PC-3 (cell line): ENCODE measurements at regions of chr6 and their contacts with region 1.

Region 1: DNA sequence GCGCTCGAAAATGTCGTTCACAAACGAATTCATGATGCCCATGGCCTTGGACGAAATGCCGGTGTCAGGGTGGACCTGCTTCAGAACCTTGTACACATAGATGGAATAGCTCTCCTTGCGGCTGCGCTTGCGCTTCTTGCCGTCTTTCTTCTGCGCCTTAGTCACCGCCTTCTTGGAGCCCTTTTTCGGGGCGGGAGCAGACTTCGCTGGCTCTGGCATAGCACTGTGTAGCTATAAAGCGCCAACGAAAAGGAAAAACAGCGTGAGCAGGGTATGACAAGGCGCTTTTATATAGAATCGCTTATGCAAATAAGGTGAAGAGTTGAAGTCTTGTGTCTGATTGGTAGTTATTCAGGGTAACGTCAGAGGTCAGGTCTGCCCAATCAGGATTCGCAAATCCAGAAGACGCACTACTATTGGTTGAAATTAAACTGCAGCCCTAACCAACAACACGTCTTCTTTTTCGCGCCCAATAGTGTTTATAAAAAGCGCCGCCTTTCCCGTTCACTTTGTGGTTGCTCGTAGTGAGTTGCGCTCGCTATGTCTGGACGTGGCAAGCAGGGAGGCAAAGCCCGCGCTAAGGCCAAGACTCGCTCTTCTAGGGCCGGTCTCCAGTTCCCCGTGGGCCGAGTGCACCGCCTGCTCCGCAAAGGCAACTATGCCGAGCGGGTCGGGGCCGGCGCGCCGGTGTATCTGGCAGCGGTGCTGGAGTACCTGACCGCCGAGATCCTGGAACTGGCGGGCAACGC is 114.8 kb upstream of the PRSS16 start:
- DNase-seq: peak; percentile 99
- ATAC-seq: peak; percentile 72
- H3K4me3 ChIP-seq: peak overlapping the region; percentile 82
- H3K27ac ChIP-seq: peak overlapping the region; percentile 95
- H3K4me1 ChIP-seq: peaks cover 32% of the 10 kb centered on the region
- H3K27me3 ChIP-seq: no peaks in the 10 kb centered on the region
- CTCF ChIP-seq: no peak

Region 2: DNA sequence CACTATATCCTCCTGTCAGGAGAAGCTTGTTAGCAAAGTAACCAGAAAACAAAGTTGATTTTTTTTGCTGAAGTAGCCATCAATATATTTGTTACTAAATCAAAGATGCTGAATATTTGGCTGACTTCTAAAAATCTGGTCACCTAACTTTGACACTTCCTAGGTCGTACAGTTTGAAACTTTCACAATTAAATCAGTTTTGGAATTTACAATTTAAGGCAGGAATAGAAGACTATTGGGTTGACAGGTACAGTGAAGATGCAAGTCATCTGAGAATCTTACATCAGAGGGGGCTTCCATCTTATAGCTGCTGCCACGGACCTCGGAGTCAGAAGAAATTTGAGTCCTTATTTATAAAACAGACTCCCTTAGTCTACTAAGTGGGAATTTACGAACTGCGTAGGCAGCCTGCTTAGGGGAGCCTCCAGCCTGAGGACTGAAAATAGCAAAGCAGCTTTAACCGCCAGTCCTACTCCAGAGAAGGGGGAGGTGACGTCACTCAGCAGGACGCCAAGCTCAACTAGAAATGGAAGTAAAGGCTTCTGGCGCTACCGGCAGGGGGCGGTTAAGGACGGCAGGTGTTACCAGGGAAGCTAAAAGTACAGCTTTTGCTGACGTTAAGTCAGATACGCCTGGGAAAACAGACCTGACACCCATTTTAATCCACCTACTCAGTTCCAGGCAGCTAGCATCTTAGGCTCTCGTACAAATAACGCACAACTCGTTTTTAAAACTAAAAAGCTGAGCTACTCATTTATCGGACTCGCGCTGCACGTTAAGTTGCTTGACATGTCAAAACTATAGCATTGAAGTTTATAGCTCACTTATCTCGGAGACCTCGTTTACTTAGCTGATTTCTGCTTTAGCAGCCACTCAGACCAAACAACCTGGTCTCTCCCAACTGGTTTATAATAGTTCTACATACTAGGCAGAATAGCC is 1106.5 kb before region 1 on chr6:
- CTCF ChIA-PET with region 1: no interaction called
- POLR2A ChIA-PET with region 1: no interaction called
- intact Hi-C with region 1: loop called (anchors 2 kb)
- DNase-seq: peak; percentile 96
- ATAC-seq: peak; percentile 37
- H3K4me3 ChIP-seq: peak overlapping the region; percentile 73
- H3K27ac ChIP-seq: peak overlapping the region; percentile 56
- H3K4me1 ChIP-seq: peaks cover 60% of the 10 kb centered on the region
- H3K27me3 ChIP-seq: no peaks in the 10 kb centered on the region
- CTCF ChIP-seq: peak; percentile 85

Region 3: DNA sequence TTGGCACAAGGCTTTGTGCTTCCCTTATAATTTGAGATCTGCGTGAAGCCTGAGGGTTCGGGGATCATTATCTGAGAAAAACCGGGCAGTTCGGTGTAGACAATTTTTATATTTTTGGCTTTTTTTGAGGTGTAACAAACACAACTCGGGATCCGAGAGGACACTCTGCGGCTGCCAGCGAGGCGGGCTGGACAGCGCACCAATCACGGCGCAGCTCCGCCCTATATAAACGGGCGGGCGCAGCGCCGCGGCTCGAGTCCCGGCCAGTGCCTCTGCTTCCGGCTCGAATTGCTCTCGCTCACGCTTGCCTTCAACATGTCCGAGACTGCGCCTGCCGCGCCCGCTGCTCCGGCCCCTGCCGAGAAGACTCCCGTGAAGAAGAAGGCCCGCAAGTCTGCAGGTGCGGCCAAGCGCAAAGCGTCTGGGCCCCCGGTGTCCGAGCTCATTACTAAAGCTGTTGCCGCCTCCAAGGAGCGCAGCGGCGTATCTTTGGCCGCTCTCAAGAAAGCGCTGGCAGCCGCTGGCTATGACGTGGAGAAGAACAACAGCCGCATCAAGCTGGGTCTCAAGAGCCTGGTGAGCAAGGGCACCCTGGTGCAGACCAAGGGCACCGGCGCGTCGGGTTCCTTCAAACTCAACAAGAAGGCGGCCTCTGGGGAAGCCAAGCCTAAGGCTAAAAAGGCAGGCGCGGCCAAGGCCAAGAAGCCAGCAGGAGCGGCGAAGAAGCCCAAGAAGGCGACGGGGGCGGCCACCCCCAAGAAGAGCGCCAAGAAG is 976.4 kb before region 1 on chr6:
- CTCF ChIA-PET with region 1: no interaction called
- POLR2A ChIA-PET with region 1: interaction called, 18 read pairs
- intact Hi-C with region 1: loop called (anchors 5 kb)
- DNase-seq: peak; percentile 95
- ATAC-seq: peak; percentile 47
- H3K4me3 ChIP-seq: peak overlapping the region; percentile 90
- H3K27ac ChIP-seq: peak overlapping the region; percentile 79
- H3K4me1 ChIP-seq: peaks cover 25% of the 10 kb centered on the region
- H3K27me3 ChIP-seq: no peaks in the 10 kb centered on the region
- CTCF ChIP-seq: no peak

Region 4: GRCh38 chr6:26553635-26554446 is 578.9 kb before region 1 on chr6:
- CTCF ChIA-PET with region 1: no interaction called
- POLR2A ChIA-PET with region 1: interaction called, 11 read pairs
- intact Hi-C with region 1: no loop called
- DNase-seq: peak; percentile 95
- ATAC-seq: peak; percentile 63
- H3K4me3 ChIP-seq: peak overlapping the region; percentile 93
- H3K27ac ChIP-seq: peak overlapping the region; percentile 62
- H3K4me1 ChIP-seq: peaks cover 15% of the 10 kb centered on the region
- H3K27me3 ChIP-seq: no peaks in the 10 kb centered on the region
- CTCF ChIP-seq: no peak

Region 5: GRCh38 chr6:27025351-27025750 is 107.4 kb before region 1 on chr6:
- CTCF ChIA-PET with region 1: no interaction called
- POLR2A ChIA-PET with region 1: no interaction called
- intact Hi-C with region 1: no loop called
- DNase-seq: peak; percentile 30
- ATAC-seq: no peak
- H3K4me3 ChIP-seq: no peak overlapping the region
- H3K27ac ChIP-seq: no peak overlapping the region
- H3K4me1 ChIP-seq: peaks cover 7% of the 10 kb centered on the region; the same call in 1 of the 2 replicates
- H3K27me3 ChIP-seq: no peaks in the 10 kb centered on the region
- CTCF ChIP-seq: no peak

Region 6: GRCh38 chr6:27049863-27050781 is 82.6 kb before region 1 on chr6:
- CTCF ChIA-PET with region 1: no interaction called
- POLR2A ChIA-PET with region 1: no interaction called
- intact Hi-C with region 1: no loop called
- DNase-seq: no peak
- ATAC-seq: no peak
- H3K4me3 ChIP-seq: no peak overlapping the region
- H3K27ac ChIP-seq: no peak overlapping the region
- H3K4me1 ChIP-seq: no peaks in the 10 kb centered on the region
- H3K27me3 ChIP-seq: no peaks in the 10 kb centered on the region
- CTCF ChIP-seq: no peak

Region 7: GRCh38 chr6:27146706-27147505 is 14.2 kb after region 1 on chr6:
- CTCF ChIA-PET with region 1: interaction called, 3 read pairs
- POLR2A ChIA-PET with region 1: interaction called, 80 read pairs
- intact Hi-C with region 1: loop called (anchors 1 kb)
- DNase-seq: peak; percentile 98
- ATAC-seq: peak; percentile 70
- H3K4me3 ChIP-seq: peak overlapping the region; percentile 82
- H3K27ac ChIP-seq: peak overlapping the region; percentile 86
- H3K4me1 ChIP-seq: peaks cover 22% of the 10 kb centered on the region; the same call in 1 of the 2 replicates
- H3K27me3 ChIP-seq: no peaks in the 10 kb centered on the region
- CTCF ChIP-seq: no peak

Region 8: DNA sequence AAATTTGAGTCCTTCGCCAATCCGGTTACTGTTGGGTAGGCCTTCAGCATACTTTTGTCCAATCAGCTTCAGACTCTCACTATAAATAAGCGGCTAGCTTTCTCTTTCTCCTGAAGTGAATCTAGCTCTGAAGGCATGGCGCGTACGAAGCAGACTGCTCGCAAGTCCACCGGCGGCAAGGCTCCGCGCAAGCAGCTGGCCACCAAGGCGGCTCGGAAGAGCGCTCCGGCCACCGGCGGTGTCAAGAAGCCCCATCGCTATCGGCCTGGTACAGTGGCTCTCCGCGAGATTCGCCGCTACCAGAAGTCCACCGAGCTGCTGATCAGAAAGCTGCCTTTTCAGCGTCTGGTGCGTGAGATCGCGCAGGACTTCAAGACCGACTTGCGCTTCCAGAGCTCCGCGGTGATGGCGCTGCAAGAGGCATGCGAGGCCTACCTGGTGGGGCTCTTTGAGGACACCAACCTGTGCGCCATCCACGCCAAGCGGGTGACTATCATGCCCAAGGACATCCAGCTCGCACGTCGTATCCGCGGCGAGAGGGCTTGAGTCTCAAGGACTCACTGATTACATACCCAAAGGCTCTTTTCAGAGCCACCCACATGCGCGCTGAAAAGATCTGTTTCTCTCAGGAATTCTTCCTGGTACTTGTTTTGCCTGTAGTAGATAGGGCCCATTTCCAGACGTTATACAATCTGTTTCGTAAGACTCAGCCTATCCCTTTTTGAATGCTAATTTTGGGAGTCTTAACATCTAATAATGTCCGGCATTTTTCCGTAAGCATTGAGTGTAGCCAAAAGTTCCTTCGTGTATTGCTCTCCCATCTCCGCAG is 677.4 kb after region 1 on chr6:
- CTCF ChIA-PET with region 1: no interaction called
- POLR2A ChIA-PET with region 1: interaction called, 5 read pairs
- intact Hi-C with region 1: loop called (anchors 1 kb)
- DNase-seq: peak; percentile 99
- ATAC-seq: peak; percentile 28
- H3K4me3 ChIP-seq: peak overlapping the region; percentile 76
- H3K27ac ChIP-seq: peak overlapping the region; percentile 65
- H3K4me1 ChIP-seq: peaks cover 28% of the 10 kb centered on the region
- H3K27me3 ChIP-seq: no peaks in the 10 kb centered on the region
- CTCF ChIP-seq: 0 out of 2 replicates have a peak, but pooled peaks have one; percentile 14

Region 9: DNA sequence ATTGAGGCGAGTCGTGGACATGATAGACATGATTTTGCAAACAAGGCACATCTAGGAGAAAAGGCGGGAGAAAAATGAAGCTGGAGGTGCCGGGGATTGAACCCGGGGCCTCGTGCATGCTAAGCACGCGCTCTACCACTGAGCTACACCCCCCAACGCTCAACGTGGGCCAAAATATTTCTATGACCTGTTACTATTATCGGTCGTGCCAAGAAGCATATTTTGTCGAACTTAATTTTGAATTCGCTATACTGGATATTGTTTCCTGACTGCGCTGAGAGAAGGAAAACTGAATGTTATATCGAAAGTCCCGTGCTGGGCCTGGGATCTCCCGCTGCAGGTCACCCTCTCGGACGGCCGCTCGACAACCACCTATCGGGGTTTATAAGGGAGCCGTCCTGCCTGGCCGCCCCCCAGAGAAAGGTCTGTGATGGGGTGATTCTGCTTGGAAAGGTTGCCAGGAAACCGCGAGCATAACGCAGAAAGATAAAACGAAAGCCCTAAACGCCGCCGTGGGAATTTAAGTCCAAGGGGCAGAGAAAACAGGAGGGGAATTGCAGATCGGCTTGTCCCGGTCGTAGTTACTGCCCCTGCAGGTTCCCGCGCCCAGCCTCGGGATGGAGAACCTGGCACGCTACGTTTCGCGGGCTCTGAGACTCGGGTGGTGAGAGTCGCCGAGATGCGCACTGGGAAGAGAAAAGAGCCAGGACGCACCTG is 1731.1 kb after region 1 on chr6:
- CTCF ChIA-PET with region 1: no interaction called
- POLR2A ChIA-PET with region 1: no interaction called
- intact Hi-C with region 1: loop called (anchors 5 kb)
- DNase-seq: peak; percentile 91
- ATAC-seq: peak; percentile 61
- H3K4me3 ChIP-seq: peak overlapping the region; percentile 87
- H3K27ac ChIP-seq: peak overlapping the region; percentile 22; the same call in 1 of the 2 replicates
- H3K4me1 ChIP-seq: peaks cover 29% of the 10 kb centered on the region
- H3K27me3 ChIP-seq: no peaks in the 10 kb centered on the region
- CTCF ChIP-seq: no peak